Activated CD8-positive, alpha-beta T cell treated with anti-CD3 and anti-CD28 coated beads, Interleukin-2, amount 10 ng/mL, durations not matched to agents 7 days and 5 days (primary cell): ENCODE measurements at regions of chr7 and their contacts with region 1.

Region 1: GRCh38 chr7:97104719-97105238 is 12.7 kb upstream of the SDHAF3 start:
- DNase-seq: peak; percentile 69
- ATAC-seq: peak; percentile 61
- H3K4me3 Mint-ChIP-seq: no peak overlapping the region
- H3K27ac Mint-ChIP-seq: no peak overlapping the region
- H3K4me1 Mint-ChIP-seq: no peaks in the 10 kb centered on the region
- H3K27me3 Mint-ChIP-seq: peaks cover 22% of the 10 kb centered on the region

Region 2: DNA sequence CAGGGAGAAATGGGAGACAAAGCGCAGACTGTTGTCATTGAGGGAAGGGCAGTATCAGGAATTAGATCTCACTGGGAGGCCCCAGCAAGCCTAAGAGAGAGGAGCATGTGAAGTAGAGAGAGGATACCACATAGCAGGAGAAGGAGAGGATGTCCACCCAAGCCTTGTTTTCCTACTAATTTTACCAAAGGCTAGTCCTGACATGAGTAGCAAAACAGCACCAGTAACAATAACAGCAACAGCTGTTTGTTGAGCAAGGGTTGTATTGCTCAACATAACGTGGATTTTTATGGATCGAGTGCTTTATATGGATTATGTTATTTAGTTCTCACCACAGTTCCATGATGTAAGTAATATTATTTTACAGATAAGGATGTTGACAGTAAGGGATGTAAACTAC is 234.6 kb before region 1 on chr7:
- CTCF ChIA-PET with region 1: no interaction called
- POLR2A ChIA-PET with region 1: no interaction called
- DNase-seq: no peak
- ATAC-seq: no peak
- H3K4me3 Mint-ChIP-seq: no peak overlapping the region
- H3K27ac Mint-ChIP-seq: no peak overlapping the region
- H3K4me1 Mint-ChIP-seq: peaks cover 3% of the 10 kb centered on the region
- H3K27me3 Mint-ChIP-seq: peaks cover 12% of the 10 kb centered on the region

Region 3: DNA sequence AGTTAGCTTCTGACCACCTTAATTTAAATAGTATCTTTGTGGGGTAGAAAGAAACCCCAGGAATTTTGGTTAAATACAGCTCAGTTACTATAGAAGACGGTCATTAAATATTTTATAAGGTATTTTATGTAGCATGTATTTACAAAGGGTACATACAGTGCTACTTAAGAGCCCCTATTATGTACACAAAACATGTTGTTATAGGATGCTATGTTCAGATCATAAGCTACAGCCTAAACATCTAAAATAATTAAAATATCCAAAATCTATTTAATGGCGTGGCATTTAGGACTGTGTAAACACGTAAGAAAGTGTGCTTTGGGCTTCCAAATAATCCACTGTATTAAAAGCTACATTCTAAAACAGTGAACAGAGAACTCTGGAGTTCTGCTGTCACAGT is 40.8 kb before region 1 on chr7:
- CTCF ChIA-PET with region 1: no interaction called
- POLR2A ChIA-PET with region 1: no interaction called
- DNase-seq: no peak
- ATAC-seq: no peak
- H3K4me3 Mint-ChIP-seq: no peak overlapping the region
- H3K27ac Mint-ChIP-seq: no peak overlapping the region
- H3K4me1 Mint-ChIP-seq: no peaks in the 10 kb centered on the region
- H3K27me3 Mint-ChIP-seq: peaks cover 14% of the 10 kb centered on the region

Region 4: DNA sequence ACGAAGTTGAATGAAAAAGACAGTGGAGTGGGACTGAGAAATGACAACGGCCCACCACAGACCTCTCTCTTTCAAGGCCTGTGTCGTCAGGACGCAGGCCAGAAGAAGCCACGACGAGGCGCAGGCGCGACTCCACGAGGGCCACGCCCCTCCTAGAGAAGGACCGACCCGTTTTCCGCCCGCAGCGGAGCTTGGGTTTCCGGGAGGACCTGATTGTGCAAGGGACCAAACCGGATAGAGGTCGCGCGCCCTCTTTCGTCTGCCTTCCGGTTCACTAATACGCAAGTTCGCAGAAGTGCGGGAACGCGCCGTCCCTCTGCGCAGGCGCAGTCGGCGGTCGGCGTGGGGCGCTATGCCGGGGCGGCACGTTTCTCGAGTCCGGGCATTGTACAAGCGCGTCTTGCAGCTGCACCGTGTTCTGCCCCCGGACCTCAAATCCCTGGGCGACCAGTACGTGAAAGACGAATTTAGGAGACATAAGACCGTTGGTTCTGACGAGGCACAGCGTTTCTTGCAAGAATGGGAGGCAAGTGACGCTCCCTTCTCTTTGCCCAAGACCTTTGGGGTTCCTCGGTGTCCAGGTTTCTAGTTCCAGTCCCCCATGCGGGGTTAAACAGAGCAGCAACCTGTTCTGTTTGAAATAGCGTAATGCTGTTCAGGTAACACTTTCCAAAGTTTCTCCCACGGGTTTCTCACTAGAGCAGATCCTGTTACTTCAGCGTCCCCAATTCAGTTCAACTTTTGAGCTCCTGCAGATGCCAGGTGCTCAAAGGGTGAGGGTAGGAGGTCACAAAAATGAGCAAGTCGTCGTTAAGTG is 12.8 kb after region 1 on chr7 and contains the start of gene SDHAF3:
- CTCF ChIA-PET with region 1: interaction called, 13 read pairs
- POLR2A ChIA-PET with region 1: no interaction called
- DNase-seq: peak; percentile 99
- ATAC-seq: peak; percentile 96
- H3K4me3 Mint-ChIP-seq: peak within 1 kb of the TSS; percentile 91
- H3K27ac Mint-ChIP-seq: peak within 1 kb of the TSS; percentile 97
- H3K4me1 Mint-ChIP-seq: peaks cover 33% of the 10 kb centered on the region
- H3K27me3 Mint-ChIP-seq: no peaks in the 10 kb centered on the region
- total RNA-seq, gene SDHAF3: 21.0 to 24.2 TPM

Region 5: GRCh38 chr7:97499204-97499603 is 394.4 kb after region 1 on chr7:
- CTCF ChIA-PET with region 1: no interaction called
- POLR2A ChIA-PET with region 1: no interaction called
- DNase-seq: peak; percentile 26
- ATAC-seq: no peak
- H3K4me3 Mint-ChIP-seq: no peak overlapping the region
- H3K27ac Mint-ChIP-seq: no peak overlapping the region
- H3K4me1 Mint-ChIP-seq: no peaks in the 10 kb centered on the region
- H3K27me3 Mint-ChIP-seq: peaks cover 2% of the 10 kb centered on the region

Region 6: GRCh38 chr7:97835296-97836138 is 730.7 kb after region 1 on chr7:
- CTCF ChIA-PET with region 1: interaction called, 10 read pairs
- POLR2A ChIA-PET with region 1: no interaction called
- DNase-seq: peak; percentile 71
- ATAC-seq: peak; percentile 74
- H3K4me3 Mint-ChIP-seq: no peak overlapping the region
- H3K27ac Mint-ChIP-seq: no peak overlapping the region
- H3K4me1 Mint-ChIP-seq: no peaks in the 10 kb centered on the region
- H3K27me3 Mint-ChIP-seq: peaks cover 29% of the 10 kb centered on the region